ENCODE measurements at regions of chr1 and their contacts with region 1.

Region 1: DNA sequence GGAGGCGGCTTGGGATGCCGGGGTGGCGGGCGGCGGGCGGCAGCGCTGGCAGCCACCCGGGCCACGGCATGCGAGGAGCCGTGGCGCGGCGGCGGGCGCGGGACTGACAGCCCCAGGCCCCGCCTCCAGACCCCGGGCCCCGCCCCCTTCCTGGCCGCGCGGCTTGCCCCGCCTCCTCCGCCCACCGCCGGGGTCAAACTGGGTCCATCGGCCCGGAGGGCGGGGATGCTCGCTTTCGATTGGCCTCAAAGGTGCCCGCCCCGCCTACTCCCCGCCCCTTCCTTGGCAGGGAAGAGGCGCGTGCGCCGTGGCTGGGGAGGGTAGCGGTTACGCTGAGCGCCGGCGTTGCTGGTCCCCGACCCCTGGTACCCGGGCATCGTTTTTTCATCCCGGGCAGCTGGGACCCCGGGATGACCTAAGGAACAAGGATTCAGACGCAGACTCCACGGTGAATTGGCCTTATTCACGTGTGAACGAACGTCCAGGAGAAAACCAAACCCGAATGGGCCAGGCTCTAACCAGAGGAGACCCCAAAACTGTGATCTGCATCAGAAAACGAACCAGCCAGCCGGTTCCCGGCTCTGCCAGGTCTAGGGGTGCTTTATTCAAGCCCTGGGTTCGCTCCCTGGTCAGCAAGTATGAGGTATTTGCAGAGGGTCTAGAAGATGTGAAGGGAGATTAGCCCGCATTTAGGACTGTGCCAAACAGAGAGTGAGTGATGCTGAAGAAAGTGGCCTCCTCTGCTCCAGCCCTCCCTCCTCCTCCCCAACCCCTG is 117.2 kb upstream of the GUCA2B start:
- DNase-seq: peak; percentile 81 to 98
- H3K4me3 ChIP-seq: peak overlapping the region; percentile 91 to 99
- H3K27ac ChIP-seq: peak overlapping the region; percentile 31 to 84
- H3K4me1 ChIP-seq: peaks cover 6 to 7% of the 10 kb centered on the region in 2 donors
- H3K27me3 ChIP-seq: no peaks in the 10 kb centered on the region
- CTCF ChIP-seq: no peak

Region 2: GRCh38 chr1:41516168-41517061 is 519.6 kb before region 1 on chr1:
- intact Hi-C with region 1: loop called (anchors 10 kb)
- DNase-seq: peak; percentile 55 to 96
- H3K4me3 ChIP-seq: peak overlapping the region; percentile 40 to 69
- H3K27ac ChIP-seq: peak overlapping the region in 1 of 2 donors; percentile 40
- H3K4me1 ChIP-seq: peaks cover 3 to 7% of the 10 kb centered on the region in 2 donors
- H3K27me3 ChIP-seq: no peaks in the 10 kb centered on the region
- CTCF ChIP-seq: peak; percentile 88 to 96 (median 89)

Region 3: GRCh38 chr1:41662061-41662764 is 373.8 kb before region 1 on chr1:
- intact Hi-C with region 1: loop called (anchors 1 kb)
- DNase-seq: peak; percentile 46 to 87
- H3K4me3 ChIP-seq: peak overlapping the region; percentile 71 to 96
- H3K27ac ChIP-seq: peak overlapping the region; percentile 97 to 99
- H3K4me1 ChIP-seq: peaks cover 4 to 20% of the 10 kb centered on the region in 2 donors
- H3K27me3 ChIP-seq: no peaks in the 10 kb centered on the region
- CTCF ChIP-seq: no peak

Region 4: GRCh38 chr1:42462828-42463763 is 427.1 kb after region 1 on chr1 and contains the start of gene CCDC30:
- intact Hi-C with region 1: loop called (anchors 5 kb)
- DNase-seq: peak; percentile 94 to 98
- H3K4me3 ChIP-seq: peak within 1 kb of the TSS; percentile 77
- H3K27ac ChIP-seq: peak within 1 kb of the TSS in 1 of 2 donors; percentile 23
- H3K4me1 ChIP-seq: no peaks in the 10 kb centered on the region
- H3K27me3 ChIP-seq: no peaks in the 10 kb centered on the region
- CTCF ChIP-seq: no peak
- total RNA-seq, gene CCDC30: not detected

Region 5: GRCh38 chr1:42924082-42924850 is 888.2 kb after region 1 on chr1:
- intact Hi-C with region 1: loop called (anchors 5 kb)
- DNase-seq: peak; percentile 85 to 97
- H3K4me3 ChIP-seq: peak overlapping the region; percentile 81 to 89
- H3K27ac ChIP-seq: peak overlapping the region; percentile 97 to 98
- H3K4me1 ChIP-seq: peaks cover 3 to 9% of the 10 kb centered on the region in 2 donors
- H3K27me3 ChIP-seq: no peaks in the 10 kb centered on the region
- CTCF ChIP-seq: no peak

Measured in ascending aorta (tissue), 2 donors.